ENCODE measurements at regions of chrX and their contacts with region 1.

Region 1: GRCh38 chrX:43940816-43941474 is 32.2 kb downstream of the NDP start:
- DNase-seq: peak in 1 of 2 donors; percentile 21
- H3K4me3 ChIP-seq: no peak overlapping the region
- H3K27ac ChIP-seq: no peak overlapping the region
- H3K4me1 ChIP-seq: peaks cover 0 to 10% (median 0%) of the 10 kb centered on the region in 4 donors
- H3K27me3 ChIP-seq: no peaks in the 10 kb centered on the region
- CTCF ChIP-seq: no peak

Region 2: GRCh38 chrX:43836435-43837184 is 104.3 kb before region 1 on chrX:
- intact Hi-C with region 1: loop called (anchors 5 kb)
- DNase-seq: no peak
- H3K4me3 ChIP-seq: no peak overlapping the region
- H3K27ac ChIP-seq: no peak overlapping the region
- H3K4me1 ChIP-seq: peaks cover 0 to 4% (median 0%) of the 10 kb centered on the region in 4 donors
- H3K27me3 ChIP-seq: no peaks in the 10 kb centered on the region
- CTCF ChIP-seq: peak; percentile 52 to 59

Region 3: DNA sequence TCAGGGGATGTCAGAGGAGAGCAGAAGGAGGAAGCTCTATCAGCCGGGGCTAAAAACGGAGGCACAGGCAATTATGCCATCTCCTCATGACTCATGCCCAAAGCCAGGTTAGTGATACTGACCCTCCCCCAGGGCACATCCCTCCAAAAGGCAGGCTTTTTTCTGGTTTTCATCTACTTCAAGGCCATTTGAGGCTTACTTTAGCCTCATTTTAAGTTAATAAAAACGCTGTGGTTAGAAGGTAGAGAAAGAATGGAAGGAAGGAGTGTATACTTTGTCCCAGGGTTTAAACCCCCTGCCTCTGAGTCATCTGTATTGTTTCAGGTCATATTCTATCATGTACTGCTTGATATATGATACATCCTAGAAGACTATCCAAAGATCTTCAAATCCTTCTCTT is 121.9 kb after region 1 on chrX:
- intact Hi-C with region 1: no loop called
- DNase-seq: no peak
- H3K4me3 ChIP-seq: no peak overlapping the region
- H3K27ac ChIP-seq: no peak overlapping the region
- H3K4me1 ChIP-seq: no peaks in the 10 kb centered on the region
- H3K27me3 ChIP-seq: no peaks in the 10 kb centered on the region
- CTCF ChIP-seq: no peak

Region 4: GRCh38 chrX:44088510-44089144 is 147.7 kb after region 1 on chrX:
- intact Hi-C with region 1: no loop called
- DNase-seq: no peak
- H3K4me3 ChIP-seq: no peak overlapping the region
- H3K27ac ChIP-seq: no peak overlapping the region
- H3K4me1 ChIP-seq: no peaks in the 10 kb centered on the region
- H3K27me3 ChIP-seq: no peaks in the 10 kb centered on the region
- CTCF ChIP-seq: no peak

Measured in tibial artery (tissue), 4 donors.